ENCODE measurements at regions of chr11 and their contacts with region 1.

Region 1: DNA sequence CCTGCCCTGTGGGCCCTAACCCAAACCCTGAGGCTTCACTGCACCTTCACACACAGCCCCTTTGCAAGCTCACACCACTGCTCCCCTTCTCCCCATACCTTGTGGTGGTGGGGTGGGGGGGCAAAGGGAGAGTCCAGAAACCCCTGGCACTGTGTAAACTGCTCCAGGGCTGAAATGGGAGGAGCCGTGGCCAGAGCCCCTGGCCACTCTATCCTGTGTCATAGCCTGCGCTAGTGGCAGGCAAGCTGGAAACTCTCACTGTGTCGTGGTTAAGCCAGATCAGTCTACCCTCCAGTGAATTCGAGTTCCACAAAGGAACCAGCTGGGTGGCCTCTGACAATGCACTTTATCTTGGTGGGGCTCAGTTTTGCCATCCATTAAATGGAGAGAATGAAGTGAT is 8.4 kb upstream of the SYT13 start:
- DNase-seq: no peak
- ATAC-seq: no peak
- H3K4me3 ChIP-seq: no peak overlapping the region
- H3K27ac ChIP-seq: no peak overlapping the region
- H3K4me1 ChIP-seq: no peaks in the 10 kb centered on the region
- H3K27me3 ChIP-seq: peaks cover 0 to 26% (median under 1%) of the 10 kb centered on the region in 3 donors
- CTCF ChIP-seq: no peak

Region 2: GRCh38 chr11:44943118-44943517 is 351.4 kb before region 1 on chr11:
- intact Hi-C with region 1: loop called (anchors 5 kb)
- DNase-seq: peak in 1 of 2 donors; percentile 49
- ATAC-seq: no peak
- H3K4me3 ChIP-seq: no peak overlapping the region
- H3K27ac ChIP-seq: no peak overlapping the region
- H3K4me1 ChIP-seq: peaks cover 17% of the 10 kb centered on the region
- H3K27me3 ChIP-seq: no peaks in the 10 kb centered on the region
- CTCF ChIP-seq: no peak

Region 3: DNA sequence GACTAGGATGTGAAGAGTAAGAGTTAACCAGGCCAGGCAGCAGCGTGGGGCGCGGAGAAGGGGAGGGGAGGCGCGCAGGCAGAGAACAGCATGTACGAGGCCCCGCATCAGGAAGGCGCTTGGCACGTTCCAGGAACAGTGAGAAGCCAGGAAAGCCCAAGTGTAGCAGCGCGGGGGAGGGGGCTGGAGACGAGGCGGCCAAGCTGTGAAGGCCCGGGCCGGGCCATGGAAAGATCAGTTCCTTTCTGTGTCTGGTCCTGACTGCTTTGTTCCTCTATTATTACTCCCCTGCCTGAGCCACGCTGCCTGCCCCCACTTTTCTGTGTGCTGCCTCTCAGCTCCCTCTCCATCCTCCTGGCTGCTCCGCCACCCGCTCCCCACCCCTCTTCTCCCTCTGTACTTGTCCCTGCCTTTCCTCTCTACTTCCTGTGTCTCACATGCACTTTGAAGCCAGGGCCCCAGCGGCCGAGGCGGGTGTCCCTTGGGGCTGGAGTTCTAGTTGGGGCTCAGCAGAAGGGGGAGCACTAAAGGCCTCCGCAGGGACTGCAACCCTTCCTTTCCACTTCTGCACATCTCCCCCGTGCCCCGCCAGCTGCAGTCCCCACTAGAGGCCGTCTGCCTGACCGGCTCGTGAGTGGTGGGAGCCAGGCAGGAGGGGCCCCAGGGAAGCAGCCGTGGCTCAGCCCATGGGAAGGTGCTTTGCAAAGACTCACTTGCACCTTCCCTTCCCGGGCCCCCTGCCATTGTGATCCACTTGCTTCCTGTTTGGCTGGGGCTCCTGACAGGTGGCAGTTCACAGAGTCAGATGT is 84.4 kb before region 1 on chr11:
- intact Hi-C with region 1: no loop called
- DNase-seq: peak; percentile 80 to 94
- ATAC-seq: peak; percentile 65 to 93 (median 88)
- H3K4me3 ChIP-seq: peak overlapping the region; percentile 37
- H3K27ac ChIP-seq: peak overlapping the region; percentile 63
- H3K4me1 ChIP-seq: peaks cover 28% of the 10 kb centered on the region
- H3K27me3 ChIP-seq: no peaks in the 10 kb centered on the region
- CTCF ChIP-seq: no peak